Upper lobe of right lung (tissue), 1 donor: ENCODE measurements at regions of chr14 and their contacts with region 1.

Region 1: DNA sequence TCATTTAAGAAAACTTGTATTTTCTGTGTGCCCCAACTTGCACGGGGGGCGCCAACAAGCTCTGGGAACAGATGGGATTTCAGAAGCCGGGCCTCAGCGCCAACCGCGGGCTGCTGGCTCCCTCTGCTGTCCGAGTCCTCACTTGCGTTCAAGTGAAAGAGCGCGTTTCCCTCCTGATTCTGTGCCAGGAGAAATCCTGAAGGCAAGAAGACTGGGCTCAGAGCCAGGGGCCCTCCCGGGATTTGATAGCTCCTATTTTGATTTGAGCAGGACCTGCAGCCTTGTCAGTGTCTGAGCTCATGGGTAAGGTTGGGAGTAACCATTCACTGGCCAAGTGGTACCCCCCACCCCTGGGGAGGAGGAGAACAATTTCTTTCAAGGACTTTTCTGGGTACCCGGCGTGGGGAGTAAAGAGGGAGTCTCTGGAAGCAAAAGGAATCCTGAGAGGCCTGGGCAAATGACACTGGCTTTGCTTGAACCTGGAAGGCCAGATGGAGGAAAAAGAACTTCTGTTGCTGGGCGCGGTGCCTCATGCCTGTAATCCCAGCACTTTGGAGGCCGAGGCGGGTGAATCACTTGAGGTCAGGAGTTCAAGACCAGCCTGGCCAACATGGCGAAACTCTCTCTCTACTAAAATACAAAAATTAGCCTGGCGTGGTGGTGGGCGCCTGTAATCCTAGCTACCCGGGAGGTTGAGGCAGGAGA is 179.0 kb upstream of the RGS6 start:
- DNase-seq: peak; percentile 89
- ATAC-seq: peak; percentile 92
- H3K4me3 ChIP-seq: no peak overlapping the region
- H3K27ac ChIP-seq: no peak overlapping the region
- H3K4me1 ChIP-seq: peaks cover 3% of the 10 kb centered on the region
- H3K27me3 ChIP-seq: no peaks in the 10 kb centered on the region
- CTCF ChIP-seq: peak; percentile 94

Region 2: GRCh38 chr14:71138448-71139293 is 614.6 kb before region 1 on chr14:
- intact Hi-C with region 1: loop called (anchors 10 kb)
- DNase-seq: peak; percentile 73
- ATAC-seq: peak; percentile 88
- H3K4me3 ChIP-seq: no peak overlapping the region
- H3K27ac ChIP-seq: no peak overlapping the region
- H3K4me1 ChIP-seq: peaks cover 2% of the 10 kb centered on the region
- H3K27me3 ChIP-seq: no peaks in the 10 kb centered on the region
- CTCF ChIP-seq: peak; percentile 92

Region 3: GRCh38 chr14:71815110-71815509 is 61.8 kb after region 1 on chr14:
- intact Hi-C with region 1: no loop called
- DNase-seq: no peak
- ATAC-seq: no peak
- H3K4me3 ChIP-seq: no peak overlapping the region
- H3K27ac ChIP-seq: no peak overlapping the region
- H3K4me1 ChIP-seq: no peaks in the 10 kb centered on the region
- H3K27me3 ChIP-seq: no peaks in the 10 kb centered on the region
- CTCF ChIP-seq: no peak